ENCODE measurements at regions of chr17 and their contacts with region 1.

Region 1: DNA sequence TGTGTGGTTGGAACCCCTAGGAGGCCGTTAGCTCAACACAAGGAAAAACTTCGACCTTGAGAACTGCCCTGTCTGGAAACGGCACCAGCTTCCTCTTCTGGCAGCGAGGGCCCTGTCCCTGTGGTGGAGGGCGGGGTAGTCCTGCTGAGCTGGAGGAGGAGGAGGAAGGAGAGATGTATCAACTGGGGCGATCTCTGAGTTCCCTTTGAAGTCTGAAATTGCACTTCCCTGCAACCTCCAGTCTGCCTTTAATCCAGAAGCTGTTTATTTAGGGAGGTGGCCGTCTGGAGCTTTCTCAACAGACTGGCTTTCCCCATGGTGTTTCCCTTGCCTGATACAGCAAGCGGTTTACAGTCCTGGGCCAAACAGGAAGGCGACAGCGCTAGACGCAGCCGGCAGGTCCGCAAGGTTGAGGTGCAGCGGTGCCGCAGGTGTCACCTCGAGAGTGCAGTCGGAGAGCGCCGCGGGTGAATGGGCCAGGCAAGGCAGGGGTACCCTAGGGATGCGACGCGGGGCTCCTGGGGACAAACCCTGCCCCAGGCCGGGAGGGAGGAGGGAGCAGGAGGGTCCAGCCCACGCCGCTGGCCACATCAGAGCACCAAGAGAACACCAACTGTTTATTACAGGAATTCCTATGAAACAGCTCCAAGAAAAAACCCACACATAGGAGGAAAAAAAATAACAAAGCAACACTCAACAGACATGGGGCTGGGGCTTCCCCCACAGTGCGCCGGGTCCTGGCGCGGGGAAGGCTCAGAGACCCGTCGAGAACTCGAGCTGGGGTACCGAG is 11.4 kb upstream of the MRPS23 start:
- DNase-seq: peak; percentile 55
- ATAC-seq: peak; percentile 80
- H3K4me3 Mint-ChIP-seq: peak overlapping the region; percentile 56
- H3K27ac Mint-ChIP-seq: peak overlapping the region; percentile 15
- H3K4me1 Mint-ChIP-seq: peaks cover 11% of the 10 kb centered on the region
- H3K27me3 Mint-ChIP-seq: peaks cover 43% of the 10 kb centered on the region

Region 2: GRCh38 chr17:57946798-57947358 is 85.7 kb after region 1 on chr17:
- CTCF ChIA-PET with region 1: interaction called, 13 read pairs
- POLR2A ChIA-PET with region 1: no interaction called
- DNase-seq: peak; percentile 60
- ATAC-seq: peak; percentile 91
- H3K4me3 Mint-ChIP-seq: peak overlapping the region; percentile 52
- H3K27ac Mint-ChIP-seq: no peak overlapping the region
- H3K4me1 Mint-ChIP-seq: peaks cover 40% of the 10 kb centered on the region
- H3K27me3 Mint-ChIP-seq: peaks cover 47% of the 10 kb centered on the region

Measured in activated CD8-positive, alpha-beta T cell treated with anti-CD3 and anti-CD28 coated beads, Interleukin-2, amount 10 ng/mL, durations not matched to agents 7 days and 5 days (primary cell).